A673 (cell line): ENCODE measurements at regions of chr1 and their contacts with region 1.

Region 1: GRCh38 chr1:52288286-52288685 is 77.7 kb downstream of the CC2D1B start:
- DNase-seq: peak; percentile 34
- H3K4me3 ChIP-seq: no peak overlapping the region
- H3K27ac ChIP-seq: no peak overlapping the region
- H3K4me1 ChIP-seq: no peaks in the 10 kb centered on the region
- H3K27me3 ChIP-seq: no peaks in the 10 kb centered on the region
- CTCF ChIP-seq: no peak

Region 2: DNA sequence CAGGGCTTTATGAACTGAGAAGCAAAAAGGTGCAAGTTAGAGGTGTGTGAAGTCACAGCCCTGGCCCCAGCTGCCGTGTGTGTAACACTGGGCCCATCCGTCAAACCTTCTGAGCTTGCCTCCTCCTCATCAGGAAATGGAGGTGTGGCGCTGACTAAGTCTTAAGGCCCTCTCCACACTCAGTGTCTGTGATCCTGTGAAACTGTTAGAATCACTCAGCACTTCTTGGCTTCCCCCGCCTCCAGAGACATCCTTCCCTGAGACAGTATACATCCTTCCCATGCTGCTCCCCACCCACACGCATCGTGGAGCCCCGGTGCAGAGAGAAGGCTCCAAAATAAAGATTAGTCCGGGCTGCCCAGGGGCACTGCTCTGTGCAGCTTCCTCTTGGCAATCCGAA is 1006.3 kb after region 1 on chr1:
- CTCF ChIA-PET with region 1: no interaction called
- POLR2A ChIA-PET with region 1: interaction called, 11 read pairs
- intact Hi-C with region 1: no loop called
- DNase-seq: no peak
- H3K4me3 ChIP-seq: no peak overlapping the region
- H3K27ac ChIP-seq: no peak overlapping the region
- H3K4me1 ChIP-seq: no peaks in the 10 kb centered on the region
- H3K27me3 ChIP-seq: no peaks in the 10 kb centered on the region
- CTCF ChIP-seq: no peak